Psoas muscle (tissue), 8 donors: ENCODE measurements at regions of chr7 and their contacts with region 1.

Region 1: DNA sequence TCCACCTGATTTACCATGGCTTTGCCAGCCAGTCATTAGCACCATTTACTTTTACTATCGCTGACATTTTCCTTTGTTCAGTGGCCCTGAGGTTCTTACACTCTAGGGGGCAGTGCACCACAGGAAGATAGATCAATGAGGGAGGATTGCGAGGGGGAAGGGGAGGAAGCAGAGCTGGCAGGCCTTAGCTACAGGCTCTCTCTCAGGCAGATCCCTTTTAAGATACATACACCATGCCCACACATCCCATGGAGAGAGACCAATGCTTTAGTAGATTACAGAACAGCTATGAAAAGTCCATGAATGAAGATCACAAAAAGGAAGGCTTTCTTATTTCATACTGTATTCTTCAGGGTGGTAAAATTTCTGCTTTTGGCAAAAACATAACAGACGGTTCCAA is 47.4 kb downstream of the DENND11 start:
- DNase-seq: peak in 1 of 2 donors; percentile 26
- ATAC-seq: peak; percentile 59 to 67 (median 64)
- H3K4me3 ChIP-seq: no peak overlapping the region
- H3K27ac ChIP-seq: no peak overlapping the region
- H3K4me1 ChIP-seq: peaks cover 4% of the 10 kb centered on the region
- H3K27me3 ChIP-seq: no peaks in the 10 kb centered on the region
- CTCF ChIP-seq: peak; percentile 53

Region 2: GRCh38 chr7:141262101-141263090 is 392.2 kb before region 1 on chr7:
- intact Hi-C with region 1: loop called in 1 of 2 experiments (anchors 5 kb)
- DNase-seq: no peak
- ATAC-seq: no peak
- H3K4me3 ChIP-seq: no peak overlapping the region
- H3K27ac ChIP-seq: no peak overlapping the region
- H3K4me1 ChIP-seq: no peaks in the 10 kb centered on the region
- H3K27me3 ChIP-seq: no peaks in the 10 kb centered on the region
- CTCF ChIP-seq: no peak

Region 3: DNA sequence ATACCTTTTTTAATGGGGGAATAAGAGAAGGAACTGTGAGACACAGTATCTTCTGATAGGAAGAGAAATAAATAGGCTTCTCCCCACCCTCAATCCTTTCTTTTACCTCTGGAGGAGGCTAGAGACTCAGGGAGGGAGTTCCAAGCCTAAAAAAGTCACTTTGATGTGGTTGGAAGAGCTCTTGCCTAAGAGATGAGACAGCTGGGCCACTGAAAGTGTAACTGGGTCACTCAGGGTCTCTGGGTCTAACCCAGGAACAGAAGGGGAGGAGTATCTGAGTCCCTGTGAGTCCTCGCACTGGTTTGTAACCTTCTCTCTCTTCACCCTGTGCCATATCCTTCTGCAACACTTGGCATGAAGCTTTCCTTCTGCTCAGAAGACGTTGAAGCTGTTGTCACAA is 326.3 kb before region 1 on chr7:
- intact Hi-C with region 1: loop called in 1 of 2 experiments (anchors 5 kb)
- DNase-seq: no peak
- ATAC-seq: peak; percentile 91 to 97 (median 93)
- H3K4me3 ChIP-seq: no peak overlapping the region
- H3K27ac ChIP-seq: no peak overlapping the region
- H3K4me1 ChIP-seq: no peaks in the 10 kb centered on the region
- H3K27me3 ChIP-seq: no peaks in the 10 kb centered on the region
- CTCF ChIP-seq: peak; percentile 31

Region 4: GRCh38 chr7:141551094-141551781 is 103.3 kb before region 1 on chr7 and contains the start of gene AGK:
- intact Hi-C with region 1: loop called in 1 of 2 experiments (anchors 5 kb)
- DNase-seq: peak; percentile 72 to 86
- ATAC-seq: peak; percentile 94 to 96 (median 96)
- H3K4me3 ChIP-seq: peak within 1 kb of the TSS; percentile 88
- H3K27ac ChIP-seq: peak within 1 kb of the TSS; percentile 76
- H3K4me1 ChIP-seq: peaks cover 5% of the 10 kb centered on the region
- H3K27me3 ChIP-seq: no peaks in the 10 kb centered on the region
- CTCF ChIP-seq: no peak
- total RNA-seq, gene AGK: 7.8 to 15.4 (median 9.8) TPM

Region 5: GRCh38 chr7:141785706-141786552 is 131.4 kb after region 1 on chr7:
- intact Hi-C with region 1: loop called in 1 of 2 experiments (anchors 5 kb)
- DNase-seq: no peak
- ATAC-seq: peak in 1 of 4 donors; percentile 64
- H3K4me3 ChIP-seq: no peak overlapping the region
- H3K27ac ChIP-seq: no peak overlapping the region
- H3K4me1 ChIP-seq: no peaks in the 10 kb centered on the region
- H3K27me3 ChIP-seq: no peaks in the 10 kb centered on the region
- CTCF ChIP-seq: peak; percentile 63